Cardiac septum (tissue), 1 donor: ENCODE measurements at regions of chr11 and their contacts with region 1.

Region 1: GRCh38 chr11:15208378-15209222 is 93.9 kb downstream of the INSC start:
- DNase-seq: peak; percentile 90

Region 2: DNA sequence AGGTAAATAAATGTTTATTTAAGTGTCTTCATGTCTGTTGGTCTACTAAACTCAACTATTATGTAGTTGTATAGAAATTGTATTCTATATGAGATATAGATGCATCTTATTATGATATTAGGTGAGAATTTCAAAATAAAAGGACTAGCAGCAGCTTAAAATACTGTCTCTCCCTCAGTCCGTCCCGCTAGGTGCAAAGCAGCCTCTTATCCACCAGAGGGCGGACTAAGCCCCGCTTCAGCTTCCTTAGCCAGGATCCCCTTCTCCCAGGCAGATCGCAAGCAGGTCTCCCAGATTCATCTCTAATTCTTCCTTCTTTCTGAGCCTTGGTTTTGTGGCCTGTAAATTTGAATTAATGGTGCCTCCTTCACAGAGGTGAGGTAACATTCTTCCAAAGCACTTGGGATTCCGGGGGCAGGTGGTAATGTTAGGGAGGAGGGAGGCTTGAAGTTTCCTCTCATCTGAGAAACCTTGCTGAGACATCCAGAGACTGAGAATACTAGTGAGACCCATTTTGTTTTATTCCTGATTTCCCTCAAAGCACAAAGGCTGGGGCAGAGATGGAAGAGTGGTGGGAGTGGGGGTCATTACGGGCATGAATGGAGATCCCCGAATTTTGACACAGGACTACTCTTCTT is 107.4 kb before region 1 on chr11:
- intact Hi-C with region 1: loop called (anchors 1 kb)
- DNase-seq: no peak